Mammary epithelial cell (primary cell): ENCODE measurements at regions of chr2 and their contacts with region 1.

Region 1: DNA sequence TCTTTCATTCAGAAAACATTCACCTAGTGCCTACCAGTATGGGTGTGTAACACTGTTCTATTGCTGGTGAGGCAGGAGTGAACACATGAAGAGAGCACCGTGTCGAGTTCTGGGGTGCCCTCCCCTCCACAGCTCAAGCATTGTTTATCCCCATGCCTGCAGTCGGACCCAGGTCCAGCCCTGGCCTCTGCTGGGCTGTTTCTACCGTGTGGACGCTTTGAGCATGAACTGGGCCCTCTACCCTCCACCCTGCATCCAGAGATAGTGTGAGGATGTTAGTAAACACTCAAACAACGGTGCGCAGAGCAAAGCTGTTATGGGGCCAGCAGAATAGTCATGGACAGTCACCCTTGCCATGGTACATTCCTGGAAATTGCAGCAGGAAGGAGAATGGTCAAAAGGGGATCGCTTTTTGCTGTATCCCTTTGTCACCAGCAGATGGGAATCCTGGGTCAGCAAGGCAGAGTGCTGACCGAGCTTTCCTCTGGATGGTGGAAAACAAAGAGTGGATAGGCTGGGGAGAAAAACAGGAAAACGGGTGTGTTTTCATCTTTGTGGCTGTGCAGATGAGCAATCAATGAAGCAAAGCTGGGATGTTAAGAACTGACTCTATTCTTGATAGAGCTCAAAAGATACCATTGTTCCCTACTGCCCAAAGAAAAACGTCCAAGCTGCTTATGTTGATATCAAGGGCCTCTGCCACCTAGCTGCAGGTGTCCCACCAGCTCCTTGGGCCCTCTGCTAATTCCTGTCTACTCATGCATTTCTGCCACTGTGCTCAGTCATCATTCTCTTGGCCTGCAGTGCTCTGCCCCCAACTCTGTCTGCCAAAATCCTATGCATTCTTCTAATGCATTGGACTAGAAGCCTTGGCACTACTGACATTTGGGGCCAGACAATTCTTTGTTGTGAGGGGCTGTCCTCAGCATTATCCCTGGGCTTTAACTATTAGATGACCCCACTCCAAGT is 38.7 kb downstream of the REEP1 start:
- DNase-seq: no peak
- H3K4me3 ChIP-seq: no peak overlapping the region
- H3K27ac ChIP-seq: no peak overlapping the region
- H3K4me1 ChIP-seq: no peaks in the 10 kb centered on the region
- H3K27me3 ChIP-seq: no peaks in the 10 kb centered on the region
- CTCF ChIP-seq: peak in 1 of 2 donors; percentile 27

Region 2: GRCh38 chr2:86176597-86176996 is 122.1 kb before region 1 on chr2:
- CTCF ChIA-PET with region 1: no interaction called
- dilution Hi-C with region 1: no loop called
- in situ Hi-C with region 1: no loop called
- intact Hi-C with region 1: no loop called
- DNase-seq: no peak
- H3K4me3 ChIP-seq: no peak overlapping the region
- H3K27ac ChIP-seq: no peak overlapping the region
- H3K4me1 ChIP-seq: no peaks in the 10 kb centered on the region
- H3K27me3 ChIP-seq: no peaks in the 10 kb centered on the region
- CTCF ChIP-seq: no peak

Region 3: DNA sequence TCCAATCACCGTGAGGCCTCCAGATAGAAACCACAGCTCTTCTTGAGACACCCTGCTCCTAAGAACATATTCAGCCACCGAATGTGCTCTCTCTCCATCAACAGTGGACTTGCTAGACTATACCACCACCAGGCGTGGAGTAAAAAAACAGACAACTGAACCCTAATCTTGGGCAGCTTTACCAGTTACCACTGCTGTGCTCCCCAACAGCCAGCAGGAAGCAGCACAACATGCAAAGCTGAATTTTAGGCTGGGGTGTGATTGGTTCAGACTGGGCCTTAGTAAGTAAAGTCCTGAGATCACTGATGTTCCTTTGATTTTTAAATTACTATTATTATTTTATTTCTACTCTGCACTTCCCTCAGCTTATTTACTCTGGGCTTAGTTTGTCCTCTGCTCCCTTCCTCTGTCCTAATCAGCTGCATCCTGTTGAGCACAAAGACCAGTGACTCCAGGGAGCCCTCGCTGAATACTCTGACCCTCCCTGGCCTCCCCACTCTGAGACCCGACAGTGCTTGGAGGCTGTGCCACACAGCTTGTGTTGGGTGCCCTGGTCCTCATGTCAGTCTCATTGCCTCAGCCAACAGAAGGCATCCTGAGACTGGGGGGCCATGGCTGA is 77.5 kb before region 1 on chr2:
- CTCF ChIA-PET with region 1: no interaction called
- dilution Hi-C with region 1: loop called (anchors 5 kb)
- in situ Hi-C with region 1: no loop called
- intact Hi-C with region 1: no loop called
- DNase-seq: peak; percentile 32
- H3K4me3 ChIP-seq: no peak overlapping the region
- H3K27ac ChIP-seq: no peak overlapping the region
- H3K4me1 ChIP-seq: no peaks in the 10 kb centered on the region
- H3K27me3 ChIP-seq: no peaks in the 10 kb centered on the region
- CTCF ChIP-seq: peak; percentile 58 to 81

Region 4: DNA sequence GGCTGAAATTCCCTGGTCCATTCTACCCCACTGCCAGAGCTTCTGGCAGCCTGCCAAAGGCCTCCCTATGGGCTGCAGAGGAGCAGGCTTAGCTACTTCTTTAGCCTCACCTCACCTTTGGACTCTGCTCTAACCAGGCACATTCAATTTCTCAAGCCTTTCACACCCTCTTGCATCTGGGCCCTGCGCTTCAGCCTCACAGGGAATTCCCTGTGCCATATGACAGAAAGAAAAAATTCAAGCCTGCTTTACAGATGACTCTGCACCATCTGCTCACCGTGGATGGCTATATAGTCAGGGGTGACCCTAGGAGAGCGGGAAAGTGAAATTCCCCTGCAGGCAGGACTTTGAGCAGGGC is 23.8 kb before region 1 on chr2:
- CTCF ChIA-PET with region 1: no interaction called
- dilution Hi-C with region 1: no loop called
- in situ Hi-C with region 1: no loop called
- intact Hi-C with region 1: loop called (anchors 2 kb)
- DNase-seq: no peak
- H3K4me3 ChIP-seq: no peak overlapping the region
- H3K27ac ChIP-seq: no peak overlapping the region
- H3K4me1 ChIP-seq: peaks cover 6% of the 10 kb centered on the region
- H3K27me3 ChIP-seq: no peaks in the 10 kb centered on the region
- CTCF ChIP-seq: no peak

Region 5: DNA sequence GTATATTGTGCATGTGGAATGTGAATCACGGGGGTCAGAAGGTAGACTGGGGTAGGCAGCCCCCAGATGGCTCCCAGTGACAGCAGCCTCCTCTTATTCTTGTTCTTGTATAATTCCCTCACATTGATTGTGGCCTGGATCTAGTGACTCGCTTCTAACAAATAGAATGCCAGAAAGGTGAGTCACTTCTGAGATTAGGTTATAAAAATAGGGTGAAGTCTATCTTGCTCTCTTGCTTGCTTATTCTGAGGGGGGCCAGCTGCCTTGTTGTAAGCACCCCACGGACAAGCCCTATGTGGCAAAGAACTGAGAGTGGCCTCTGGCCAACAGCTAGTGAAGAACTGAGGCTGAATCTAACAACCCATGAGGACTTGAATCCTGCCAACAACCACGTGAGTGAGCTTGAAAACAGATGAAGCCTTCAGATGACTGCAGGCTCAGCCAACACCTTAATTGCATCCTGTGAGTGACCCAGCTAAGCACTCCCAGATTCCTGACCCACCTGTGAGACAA is 405.8 kb after region 1 on chr2:
- CTCF ChIA-PET with region 1: no interaction called
- dilution Hi-C with region 1: no loop called
- in situ Hi-C with region 1: no loop called
- intact Hi-C with region 1: no loop called
- DNase-seq: peak; percentile 82
- H3K4me3 ChIP-seq: peak overlapping the region in 2 of 3 experiments; percentile 14 to 15
- H3K27ac ChIP-seq: peak overlapping the region; percentile 83
- H3K4me1 ChIP-seq: peaks cover 23% of the 10 kb centered on the region
- H3K27me3 ChIP-seq: no peaks in the 10 kb centered on the region
- CTCF ChIP-seq: no peak